Caco-2 (cell line): ENCODE measurements at regions of chr21 and their contacts with region 1.

Region 1: DNA sequence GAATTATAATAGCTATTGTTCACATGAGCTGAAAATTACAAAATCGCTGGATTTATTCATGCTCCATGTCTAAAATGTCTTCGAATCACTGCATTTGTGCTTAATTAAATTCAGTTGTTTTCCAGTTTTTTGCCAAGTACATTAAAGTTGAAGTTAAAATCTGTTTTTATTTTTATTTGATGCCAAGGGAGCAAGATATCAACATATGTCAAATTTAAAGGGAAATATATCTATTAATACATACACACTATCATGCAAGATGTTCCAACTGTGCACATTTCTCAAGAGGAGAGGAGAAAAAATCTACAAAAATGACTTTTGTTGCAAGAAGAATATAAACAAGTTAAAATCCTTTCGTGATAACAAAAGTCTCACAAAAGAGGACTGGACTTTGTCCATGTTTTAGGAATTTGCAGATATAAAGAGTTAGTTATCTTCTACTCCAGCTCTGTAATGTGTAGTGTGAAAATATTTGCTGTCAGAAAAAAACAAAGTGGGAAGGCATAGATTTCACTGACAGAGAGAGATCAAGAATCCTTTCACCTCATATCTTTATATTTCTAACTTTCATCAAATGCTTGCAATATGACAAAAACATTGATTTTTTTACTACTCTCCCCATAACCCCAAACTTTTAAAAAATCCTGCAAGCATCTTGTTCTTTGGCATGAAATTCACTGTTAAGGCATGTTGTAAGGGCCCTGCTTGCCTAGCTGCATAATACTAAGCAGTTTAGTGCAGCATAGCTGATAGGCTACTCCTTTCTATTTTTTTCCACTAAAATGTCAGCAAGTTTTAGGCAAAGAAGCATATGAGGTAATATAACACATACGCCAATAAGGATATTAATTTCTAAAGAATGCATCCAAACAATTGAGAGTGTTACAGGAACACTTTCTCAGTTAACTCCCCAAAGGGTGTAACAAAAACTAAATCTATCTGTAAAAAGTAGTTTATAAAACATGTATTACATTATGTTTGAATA is 340.2 kb upstream of the ADAMTS5 start:
- DNase-seq: peak in 1 of 2 experiments; percentile 5
- H3K4me3 ChIP-seq: no peak overlapping the region
- H3K4me3 Mint-ChIP-seq: peak overlapping the region; percentile 37
- H3K27ac Mint-ChIP-seq: peak overlapping the region; percentile 16
- H3K4me1 ChIP-seq: peaks cover 48% of the 10 kb centered on the region
- H3K4me1 Mint-ChIP-seq: peaks cover 6% of the 10 kb centered on the region
- H3K27me3 ChIP-seq: no peaks in the 10 kb centered on the region
- H3K27me3 Mint-ChIP-seq: no peaks in the 10 kb centered on the region
- CTCF ChIP-seq: no peak

Region 2: DNA sequence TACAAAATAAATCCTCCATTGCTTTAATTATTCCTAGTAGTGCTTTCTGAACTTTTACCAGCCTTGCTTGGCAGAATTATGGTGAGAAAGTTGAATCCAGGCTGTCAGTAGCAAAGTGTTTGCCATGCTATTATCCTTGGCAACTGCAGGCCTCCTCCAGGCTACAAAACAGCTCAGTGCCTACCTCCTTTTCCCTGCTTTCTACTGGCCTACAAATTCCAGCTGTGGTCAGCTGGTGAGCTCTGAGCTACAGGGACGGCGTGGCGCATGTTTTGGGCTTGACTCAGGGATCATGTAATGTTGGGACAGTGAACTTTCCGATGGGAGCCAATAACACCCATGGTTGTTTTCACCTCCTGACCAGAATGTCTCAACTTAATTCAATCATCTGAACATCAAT is 116.0 kb after region 1 on chr21:
- CTCF ChIA-PET with region 1: no interaction called
- POLR2A ChIA-PET with region 1: no interaction called
- intact Hi-C with region 1: loop called (anchors 5 kb)
- DNase-seq: no peak
- H3K4me3 ChIP-seq: no peak overlapping the region
- H3K4me3 Mint-ChIP-seq: no peak overlapping the region
- H3K27ac Mint-ChIP-seq: peak overlapping the region; percentile 33
- H3K4me1 ChIP-seq: peaks cover 31% of the 10 kb centered on the region
- H3K4me1 Mint-ChIP-seq: peaks cover 17% of the 10 kb centered on the region
- H3K27me3 ChIP-seq: no peaks in the 10 kb centered on the region
- H3K27me3 Mint-ChIP-seq: no peaks in the 10 kb centered on the region
- CTCF ChIP-seq: no peak